ENCODE measurements at regions of chr2 and their contacts with region 1.

Region 1: GRCh38 chr2:47225061-47225859 is 70.2 kb upstream of the STPG4 start:
- DNase-seq: peak; percentile 88
- H3K4me3 ChIP-seq: no peak overlapping the region
- H3K27ac ChIP-seq: peak overlapping the region; percentile 0
- H3K4me1 ChIP-seq: peaks cover 23% of the 10 kb centered on the region
- H3K27me3 ChIP-seq: no peaks in the 10 kb centered on the region
- CTCF ChIP-seq: no peak
- POLR2A ChIP-seq: peak; percentile 59

Region 2: DNA sequence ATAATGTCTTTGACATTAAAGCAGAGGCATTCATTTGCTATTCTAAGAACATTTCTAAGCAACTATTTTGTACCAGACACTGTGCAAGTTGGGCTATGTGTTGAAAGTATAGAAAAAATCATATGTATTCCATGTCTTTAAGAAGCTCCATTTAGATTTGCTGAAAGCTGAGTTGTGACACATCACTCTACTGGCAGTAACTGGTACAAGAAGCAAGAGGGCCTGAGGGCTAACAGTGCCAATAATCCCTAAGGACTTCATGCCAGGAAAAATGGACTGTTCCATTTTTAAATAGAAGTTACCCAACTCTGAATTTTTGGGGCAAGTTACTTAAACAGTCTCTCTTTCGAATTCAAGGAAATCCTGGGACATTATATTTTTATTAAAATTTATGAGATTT is 1792.9 kb before region 1 on chr2:
- CTCF ChIA-PET with region 1: no interaction called
- POLR2A ChIA-PET with region 1: no interaction called
- dilution Hi-C with region 1: no loop called
- intact Hi-C with region 1: no loop called
- DNase-seq: no peak
- H3K4me3 ChIP-seq: no peak overlapping the region
- H3K27ac ChIP-seq: no peak overlapping the region
- H3K4me1 ChIP-seq: no peaks in the 10 kb centered on the region
- H3K27me3 ChIP-seq: no peaks in the 10 kb centered on the region
- CTCF ChIP-seq: no peak
- POLR2A ChIP-seq: no peak

Region 3: GRCh38 chr2:46964835-46965560 is 260.3 kb before region 1 on chr2:
- CTCF ChIA-PET with region 1: no interaction called
- POLR2A ChIA-PET with region 1: no interaction called
- dilution Hi-C with region 1: no loop called
- intact Hi-C with region 1: no loop called
- DNase-seq: peak; percentile 59
- H3K4me3 ChIP-seq: no peak overlapping the region
- H3K27ac ChIP-seq: peak overlapping the region; percentile 4
- H3K4me1 ChIP-seq: peaks cover 33% of the 10 kb centered on the region
- H3K27me3 ChIP-seq: no peaks in the 10 kb centered on the region
- CTCF ChIP-seq: no peak
- POLR2A ChIP-seq: no peak

Region 4: GRCh38 chr2:47195149-47195548 is 30.1 kb before region 1 on chr2:
- CTCF ChIA-PET with region 1: interaction called, 8 read pairs
- POLR2A ChIA-PET with region 1: no interaction called
- dilution Hi-C with region 1: no loop called
- intact Hi-C with region 1: loop called (anchors 2 kb)
- DNase-seq: peak; percentile 79
- H3K4me3 ChIP-seq: no peak overlapping the region
- H3K27ac ChIP-seq: no peak overlapping the region
- H3K4me1 ChIP-seq: peaks cover 34% of the 10 kb centered on the region
- H3K27me3 ChIP-seq: no peaks in the 10 kb centered on the region
- CTCF ChIP-seq: no peak
- POLR2A ChIP-seq: no peak

Region 5: GRCh38 chr2:47266939-47267710 is 41.9 kb after region 1 on chr2:
- CTCF ChIA-PET with region 1: interaction called, 6 read pairs
- POLR2A ChIA-PET with region 1: no interaction called
- dilution Hi-C with region 1: no loop called
- intact Hi-C with region 1: loop called (anchors 1 kb)
- DNase-seq: no peak
- H3K4me3 ChIP-seq: no peak overlapping the region
- H3K27ac ChIP-seq: no peak overlapping the region
- H3K4me1 ChIP-seq: peaks cover 15% of the 10 kb centered on the region
- H3K27me3 ChIP-seq: no peaks in the 10 kb centered on the region
- CTCF ChIP-seq: no peak
- POLR2A ChIP-seq: no peak

Region 6: DNA sequence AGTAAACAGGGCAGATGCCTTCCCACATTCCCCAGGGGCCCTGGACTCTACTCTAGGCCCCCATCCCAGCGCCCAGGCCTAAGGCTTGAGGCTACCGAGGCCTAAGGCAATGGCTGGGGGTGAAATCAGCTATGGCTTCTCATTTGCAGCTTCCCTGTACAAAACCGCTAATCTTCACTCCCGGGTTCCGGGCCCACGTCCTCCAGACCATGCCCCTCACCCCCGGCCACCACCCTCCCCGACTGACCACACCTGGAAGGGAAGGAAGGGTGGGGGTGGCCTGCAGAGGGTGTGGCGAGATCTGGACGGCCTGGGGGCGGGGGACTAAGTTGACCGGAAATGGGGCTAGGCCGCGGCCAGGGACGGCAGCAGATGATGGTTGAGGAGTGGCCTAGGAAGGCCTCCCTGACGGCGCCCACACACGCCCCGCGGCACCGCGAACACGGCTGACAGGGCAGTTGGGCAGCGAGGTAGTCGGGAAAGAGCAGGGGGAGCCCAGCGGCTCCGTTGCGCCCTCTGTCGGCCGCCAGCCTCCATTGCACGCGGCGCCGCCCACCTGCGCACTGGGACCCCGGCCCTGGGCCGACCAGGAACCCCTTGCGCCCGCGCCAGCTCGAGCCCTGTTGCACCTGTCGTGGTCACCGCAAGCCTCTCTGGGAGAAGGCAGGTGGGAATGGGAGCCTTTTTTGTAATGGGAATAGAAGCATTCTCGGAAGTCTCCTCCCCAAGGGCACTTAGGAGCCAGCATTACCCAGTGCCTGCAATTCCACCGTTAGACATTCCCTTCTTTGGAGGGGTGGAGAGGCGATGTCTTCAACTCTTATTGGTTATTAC is 47.0 kb after region 1 on chr2:
- CTCF ChIA-PET with region 1: interaction called, 6 read pairs
- POLR2A ChIA-PET with region 1: interaction called, 3 read pairs
- dilution Hi-C with region 1: no loop called
- intact Hi-C with region 1: loop called (anchors 1 kb)
- DNase-seq: peak; percentile 46
- H3K4me3 ChIP-seq: peak overlapping the region in 2 of 3 experiments; percentile 11 to 33
- H3K27ac ChIP-seq: peak overlapping the region; percentile 34
- H3K4me1 ChIP-seq: peaks cover 23% of the 10 kb centered on the region
- H3K27me3 ChIP-seq: no peaks in the 10 kb centered on the region
- CTCF ChIP-seq: peak; percentile 96 to 99
- POLR2A ChIP-seq: no peak

Measured in endothelial cell of umbilical vein (primary cell).